HepG2 (cell line): ENCODE measurements at regions of chr4 and their contacts with region 1.

Region 1: GRCh38 chr4:56250776-56251175 is 136.5 kb downstream of the AASDH start:
- DNase-seq: no peak
- ATAC-seq: no peak
- H3K4me3 ChIP-seq: no peak overlapping the region
- H3K27ac ChIP-seq: no peak overlapping the region
- H3K4me1 ChIP-seq: peaks cover 46% of the 10 kb centered on the region
- H3K27me3 ChIP-seq: no peaks in the 10 kb centered on the region
- CTCF ChIP-seq: no peak
- EP300 ChIP-seq: no peak
- POLR2A ChIP-seq: no peak
- RAD21 ChIP-seq: no peak

Region 2: GRCh38 chr4:56048702-56049431 is 201.9 kb before region 1 on chr4:
- CTCF ChIA-PET with region 1: no interaction called
- POLR2A ChIA-PET with region 1: no interaction called
- in situ Hi-C with region 1: no loop called
- intact Hi-C with region 1: loop called (anchors 5 kb)
- DNase-seq: no peak
- ATAC-seq: peak; percentile 93
- H3K4me3 ChIP-seq: peak overlapping the region; percentile 72 to 91 (median 83)
- H3K27ac ChIP-seq: peak overlapping the region; percentile 63
- H3K4me1 ChIP-seq: peaks cover 20% of the 10 kb centered on the region; the same call in 1 of the 2 replicates
- H3K27me3 ChIP-seq: peaks cover 0 to 3% of the 10 kb centered on the region in 2 experiments; a peak in 1 of 5 replicates
- CTCF ChIP-seq: peak; percentile 49
- EP300 ChIP-seq: no peak
- POLR2A ChIP-seq: 0 out of 4 replicates have a peak, but pooled peaks of 1 of the 2 experiments have one; percentile 16
- RAD21 ChIP-seq: peak; percentile 91

Region 3: GRCh38 chr4:56183344-56183959 is 67.3 kb before region 1 on chr4:
- CTCF ChIA-PET with region 1: no interaction called
- POLR2A ChIA-PET with region 1: no interaction called
- in situ Hi-C with region 1: no loop called
- intact Hi-C with region 1: no loop called
- DNase-seq: no peak
- ATAC-seq: peak; percentile 55
- H3K4me3 ChIP-seq: no peak overlapping the region
- H3K27ac ChIP-seq: no peak overlapping the region
- H3K4me1 ChIP-seq: peaks cover 11% of the 10 kb centered on the region
- H3K27me3 ChIP-seq: no peaks in the 10 kb centered on the region
- CTCF ChIP-seq: no peak
- EP300 ChIP-seq: no peak
- POLR2A ChIP-seq: no peak
- RAD21 ChIP-seq: no peak

Region 4: GRCh38 chr4:56276547-56276946 is 25.8 kb after region 1 on chr4:
- CTCF ChIA-PET with region 1: no interaction called
- POLR2A ChIA-PET with region 1: no interaction called
- in situ Hi-C with region 1: no loop called
- intact Hi-C with region 1: no loop called
- DNase-seq: no peak
- ATAC-seq: no peak
- H3K4me3 ChIP-seq: no peak overlapping the region
- H3K27ac ChIP-seq: no peak overlapping the region
- H3K4me1 ChIP-seq: no peaks in the 10 kb centered on the region
- H3K27me3 ChIP-seq: no peaks in the 10 kb centered on the region
- CTCF ChIP-seq: no peak
- EP300 ChIP-seq: no peak
- POLR2A ChIP-seq: no peak
- RAD21 ChIP-seq: no peak

Region 5: DNA sequence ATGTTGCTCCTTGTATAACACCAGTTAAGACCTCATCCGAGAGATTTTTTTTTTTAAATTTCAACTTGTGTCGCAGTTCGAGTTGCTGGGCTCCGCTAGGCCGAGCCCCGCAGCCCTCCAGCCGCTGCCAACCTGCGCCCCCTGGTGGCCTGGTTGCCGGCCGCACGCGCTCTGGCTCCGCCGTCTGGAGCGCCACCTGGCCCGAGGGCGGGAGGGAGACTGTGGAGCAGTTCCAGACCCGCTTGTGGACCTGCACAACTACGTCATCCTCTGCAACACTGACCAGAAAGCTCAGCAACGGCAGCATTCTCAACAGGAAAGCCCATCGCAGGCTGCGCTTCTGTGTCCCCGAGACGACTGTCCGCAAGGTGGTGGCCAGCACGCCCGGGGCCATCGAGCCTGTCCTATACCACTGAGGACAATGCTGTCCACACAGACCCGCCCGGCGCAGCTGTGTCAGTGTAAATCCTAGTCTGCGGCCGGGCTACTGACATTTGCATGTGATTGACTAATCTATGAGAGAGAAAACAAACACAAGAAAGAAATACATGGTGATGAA is 293.9 kb after region 1 on chr4:
- CTCF ChIA-PET with region 1: no interaction called
- POLR2A ChIA-PET with region 1: no interaction called
- in situ Hi-C with region 1: no loop called
- intact Hi-C with region 1: no loop called
- DNase-seq: peak; percentile 78
- ATAC-seq: peak; percentile 99
- H3K4me3 ChIP-seq: peak overlapping the region; percentile 35 to 67 (median 39)
- H3K27ac ChIP-seq: no peak overlapping the region
- H3K4me1 ChIP-seq: 0 out of 2 replicates have a peak, but pooled peaks cover 11% of the 10 kb centered on the region
- H3K27me3 ChIP-seq: 0 out of 5 replicates have a peak, but pooled peaks cover 0 to 4% of the 10 kb centered on the region in 2 experiments
- CTCF ChIP-seq: peak; percentile 98
- EP300 ChIP-seq: 0 out of 4 replicates have a peak, but pooled peaks of 1 of the 2 experiments have one; percentile 13
- POLR2A ChIP-seq: no peak
- RAD21 ChIP-seq: peak; percentile 91